Endothelial cell of umbilical vein (primary cell): ENCODE measurements at regions of chr14 and their contacts with region 1.

Region 1: DNA sequence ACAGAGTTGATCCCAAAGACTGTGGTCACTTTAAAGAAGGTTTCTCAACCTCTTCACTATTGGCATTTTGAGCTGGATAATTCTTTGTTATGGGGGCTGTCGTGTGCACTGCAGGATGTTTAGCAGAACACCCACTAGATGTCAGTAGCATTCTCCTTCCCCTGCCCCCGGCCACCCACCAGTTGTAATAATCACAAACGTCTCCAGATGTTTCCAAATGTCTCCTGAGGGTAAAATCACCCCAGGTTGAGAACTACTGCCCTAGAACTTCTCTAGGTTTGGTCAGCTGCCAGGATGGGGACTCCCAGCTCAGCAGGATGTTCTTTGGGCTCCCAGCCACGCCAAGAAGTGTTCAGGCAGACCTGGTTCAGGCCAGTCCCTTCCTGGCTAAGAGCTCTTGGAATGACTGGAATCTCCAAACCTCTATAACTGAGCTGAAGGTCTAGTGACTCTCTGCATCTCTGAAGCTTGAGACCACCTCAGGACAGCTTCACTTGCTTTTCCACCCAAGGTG is 12.5 kb upstream of the AJUBA start:
- DNase-seq: peak; percentile 49
- H3K4me3 ChIP-seq: no peak overlapping the region
- H3K27ac ChIP-seq: no peak overlapping the region
- H3K4me1 ChIP-seq: peaks cover 4% of the 10 kb centered on the region
- H3K27me3 ChIP-seq: no peaks in the 10 kb centered on the region
- CTCF ChIP-seq: peak; percentile 54 to 64
- POLR2A ChIP-seq: no peak

Region 2: DNA sequence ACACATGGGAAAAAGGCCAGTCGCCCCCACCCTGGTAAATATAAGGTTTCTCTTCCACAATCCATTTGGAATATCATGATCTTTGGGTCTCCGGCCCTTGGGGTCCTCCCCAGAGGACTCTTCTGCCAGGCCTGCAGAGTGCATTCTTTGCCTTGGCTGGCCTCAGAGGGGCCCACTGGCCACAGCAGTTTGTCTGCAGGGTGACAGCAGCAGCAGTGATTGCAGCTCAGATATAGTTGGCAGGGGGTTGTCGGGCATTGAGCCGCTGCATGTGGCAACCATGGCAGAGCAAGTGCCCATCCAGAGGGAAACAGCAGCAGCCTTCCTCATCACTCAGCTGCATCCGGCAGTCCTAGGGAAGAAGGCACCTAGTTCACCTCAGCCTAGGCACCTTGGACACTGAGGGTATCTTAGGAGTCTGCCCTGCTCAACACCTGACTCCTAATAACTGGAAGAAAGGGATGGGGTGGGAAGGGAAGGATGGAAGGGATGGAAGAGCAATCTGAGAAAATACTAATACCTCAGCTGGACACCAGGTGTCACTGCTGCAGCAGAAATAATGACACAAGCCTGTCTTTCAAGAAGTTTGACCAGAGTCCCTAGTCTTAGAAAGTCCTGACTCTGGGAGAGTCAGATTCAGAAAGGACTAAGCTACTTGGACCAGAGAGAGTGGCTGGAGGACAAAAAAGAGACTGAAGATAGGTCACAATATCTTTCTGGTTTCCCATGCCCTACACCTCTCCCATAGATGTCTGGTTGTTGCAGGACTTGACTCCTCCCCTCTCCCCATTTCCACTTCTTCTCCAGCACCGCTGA is 21.4 kb before region 1 on chr14:
- CTCF ChIA-PET with region 1: interaction called, 15 read pairs
- POLR2A ChIA-PET with region 1: no interaction called
- dilution Hi-C with region 1: no loop called
- intact Hi-C with region 1: no loop called
- DNase-seq: peak; percentile 72
- H3K4me3 ChIP-seq: no peak overlapping the region
- H3K27ac ChIP-seq: no peak overlapping the region
- H3K4me1 ChIP-seq: peaks cover 31% of the 10 kb centered on the region
- H3K27me3 ChIP-seq: no peaks in the 10 kb centered on the region
- CTCF ChIP-seq: peak; percentile 53 to 54
- POLR2A ChIP-seq: no peak

Region 3: GRCh38 chr14:23025151-23025814 is 30.5 kb after region 1 on chr14:
- CTCF ChIA-PET with region 1: interaction called, 32 read pairs
- POLR2A ChIA-PET with region 1: no interaction called
- dilution Hi-C with region 1: no loop called
- intact Hi-C with region 1: no loop called
- DNase-seq: no peak
- H3K4me3 ChIP-seq: no peak overlapping the region
- H3K27ac ChIP-seq: no peak overlapping the region
- H3K4me1 ChIP-seq: peaks cover 4% of the 10 kb centered on the region
- H3K27me3 ChIP-seq: no peaks in the 10 kb centered on the region
- CTCF ChIP-seq: no peak
- POLR2A ChIP-seq: no peak

Region 4: GRCh38 chr14:23047034-23047634 is 52.3 kb after region 1 on chr14:
- CTCF ChIA-PET with region 1: interaction called, 1,071 read pairs
- POLR2A ChIA-PET with region 1: interaction called, 3 read pairs
- dilution Hi-C with region 1: no loop called
- intact Hi-C with region 1: loop called (anchors 2 kb)
- DNase-seq: peak; percentile 81
- H3K4me3 ChIP-seq: no peak overlapping the region
- H3K27ac ChIP-seq: peak overlapping the region; percentile 37
- H3K4me1 ChIP-seq: peaks cover 41% of the 10 kb centered on the region
- H3K27me3 ChIP-seq: no peaks in the 10 kb centered on the region
- CTCF ChIP-seq: no peak
- POLR2A ChIP-seq: no peak

Region 5: GRCh38 chr14:23076785-23077408 is 82.1 kb after region 1 on chr14:
- CTCF ChIA-PET with region 1: interaction called, 20 read pairs
- POLR2A ChIA-PET with region 1: no interaction called
- dilution Hi-C with region 1: no loop called
- intact Hi-C with region 1: no loop called
- DNase-seq: peak; percentile 49
- H3K4me3 ChIP-seq: no peak overlapping the region
- H3K27ac ChIP-seq: no peak overlapping the region
- H3K4me1 ChIP-seq: peaks cover 27% of the 10 kb centered on the region
- H3K27me3 ChIP-seq: no peaks in the 10 kb centered on the region
- CTCF ChIP-seq: peak; percentile 46 to 53
- POLR2A ChIP-seq: no peak

Region 6: GRCh38 chr14:23113431-23114119 is 118.8 kb after region 1 on chr14:
- CTCF ChIA-PET with region 1: interaction called, 23 read pairs
- POLR2A ChIA-PET with region 1: no interaction called
- dilution Hi-C with region 1: no loop called
- intact Hi-C with region 1: loop called (anchors 5 kb)
- DNase-seq: no peak
- H3K4me3 ChIP-seq: no peak overlapping the region
- H3K27ac ChIP-seq: no peak overlapping the region
- H3K4me1 ChIP-seq: peaks cover 13% of the 10 kb centered on the region
- H3K27me3 ChIP-seq: peaks cover 9 to 10% of the 10 kb centered on the region in 2 experiments
- CTCF ChIP-seq: no peak
- POLR2A ChIP-seq: no peak

Region 7: DNA sequence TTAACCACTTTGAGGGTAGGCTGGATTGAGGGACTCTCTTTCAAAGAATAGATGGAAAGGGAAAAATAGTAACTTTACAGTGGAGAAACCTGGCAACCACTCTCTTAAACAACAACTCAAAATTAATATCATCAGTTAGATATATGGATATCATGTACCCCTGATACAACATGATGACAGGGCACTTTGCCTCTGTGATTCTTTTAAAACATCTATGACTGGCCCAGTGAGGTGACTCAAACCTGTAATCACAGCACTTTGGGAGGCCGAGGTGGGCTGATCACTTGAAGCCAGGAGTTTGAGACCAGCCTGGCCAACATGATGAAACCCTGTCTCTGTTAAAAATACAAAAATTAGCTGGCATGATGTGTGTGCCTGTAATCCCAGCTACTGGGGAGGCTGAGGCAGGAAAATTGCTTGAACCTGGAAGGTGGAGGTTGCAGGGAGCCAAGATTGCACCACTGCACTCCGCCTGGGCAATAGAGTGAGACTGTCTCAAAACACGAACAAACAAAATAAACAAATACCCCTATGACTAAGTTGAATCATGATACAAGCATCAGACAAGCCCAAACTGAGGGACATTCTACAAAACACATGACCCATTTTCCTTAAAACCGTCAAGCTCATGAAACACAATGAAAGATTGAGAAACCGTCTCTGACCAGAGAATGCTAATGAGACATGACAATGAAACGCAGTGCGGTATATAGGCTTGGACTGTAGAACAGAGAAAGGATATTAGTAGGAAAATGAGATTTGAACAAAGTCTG is 215.0 kb after region 1 on chr14:
- CTCF ChIA-PET with region 1: no interaction called
- POLR2A ChIA-PET with region 1: no interaction called
- dilution Hi-C with region 1: no loop called
- intact Hi-C with region 1: no loop called
- DNase-seq: no peak
- H3K4me3 ChIP-seq: no peak overlapping the region
- H3K27ac ChIP-seq: no peak overlapping the region
- H3K4me1 ChIP-seq: no peaks in the 10 kb centered on the region
- H3K27me3 ChIP-seq: peaks cover 5 to 11% of the 10 kb centered on the region in 2 experiments
- CTCF ChIP-seq: no peak
- POLR2A ChIP-seq: no peak